IMR-90 (cell line): ENCODE measurements at regions of chr3 and their contacts with region 1.

Region 1: DNA sequence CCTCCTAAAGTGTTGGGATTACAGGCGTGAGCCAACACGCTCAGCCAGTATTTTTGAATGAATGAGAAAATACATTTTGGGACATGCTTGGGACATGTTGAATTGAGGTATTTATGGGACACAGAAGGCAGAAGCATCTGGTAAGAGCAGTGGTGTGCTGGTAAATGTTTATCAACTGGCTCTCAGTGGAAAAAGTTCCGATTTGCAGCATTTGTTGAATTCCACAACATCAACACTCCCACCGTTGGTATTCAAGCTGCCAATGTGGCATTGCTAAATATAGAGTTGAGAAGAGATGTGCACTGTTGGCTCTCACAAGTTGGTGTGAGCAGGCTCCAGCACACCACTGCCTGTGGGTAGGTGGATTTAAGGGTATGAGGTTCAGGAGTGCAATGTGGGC is 35.8 kb upstream of the LRRFIP2 start:
- DNase-seq: no peak
- ATAC-seq: peak; percentile 58
- H3K4me3 ChIP-seq: no peak overlapping the region
- H3K27ac ChIP-seq: no peak overlapping the region; the same call in 1 of the 2 replicates
- H3K4me1 ChIP-seq: peaks cover 8% of the 10 kb centered on the region; the same call in 1 of the 2 replicates
- H3K27me3 ChIP-seq: no peaks in the 10 kb centered on the region
- CTCF ChIP-seq: no peak
- POLR2A ChIP-seq: no peak
- RAD21 ChIP-seq: no peak

Region 2: GRCh38 chr3:37024092-37024491 is 186.1 kb before region 1 on chr3:
- CTCF ChIA-PET with region 1: interaction called, 3 read pairs
- POLR2A ChIA-PET with region 1: no interaction called
- dilution Hi-C with region 1: no loop called
- in situ Hi-C with region 1: loop called (anchors 10 kb)
- intact Hi-C with region 1: loop called (anchors 1 kb)
- DNase-seq: peak; percentile 30
- ATAC-seq: no peak
- H3K4me3 ChIP-seq: no peak overlapping the region
- H3K27ac ChIP-seq: no peak overlapping the region
- H3K4me1 ChIP-seq: 0 out of 2 replicates have a peak, but pooled peaks cover 2% of the 10 kb centered on the region
- H3K27me3 ChIP-seq: no peaks in the 10 kb centered on the region
- CTCF ChIP-seq: peak; percentile 48
- POLR2A ChIP-seq: no peak
- RAD21 ChIP-seq: peak; percentile 56

Region 3: GRCh38 chr3:37338500-37338899 is 128.3 kb after region 1 on chr3:
- CTCF ChIA-PET with region 1: no interaction called
- POLR2A ChIA-PET with region 1: no interaction called
- dilution Hi-C with region 1: no loop called
- in situ Hi-C with region 1: no loop called
- intact Hi-C with region 1: no loop called
- DNase-seq: no peak
- ATAC-seq: no peak
- H3K4me3 ChIP-seq: no peak overlapping the region
- H3K27ac ChIP-seq: no peak overlapping the region
- H3K4me1 ChIP-seq: no peaks in the 10 kb centered on the region
- H3K27me3 ChIP-seq: no peaks in the 10 kb centered on the region
- CTCF ChIP-seq: no peak
- POLR2A ChIP-seq: no peak
- RAD21 ChIP-seq: no peak